Activated naive CD4-positive, alpha-beta T cell treated with anti-CD3 and anti-CD28 coated beads, Interleukin-2, amount 10 ng/mL, durations not matched to agents 7 days and 5 days (primary cell): ENCODE measurements at regions of chr12 and their contacts with region 1.

Region 1: DNA sequence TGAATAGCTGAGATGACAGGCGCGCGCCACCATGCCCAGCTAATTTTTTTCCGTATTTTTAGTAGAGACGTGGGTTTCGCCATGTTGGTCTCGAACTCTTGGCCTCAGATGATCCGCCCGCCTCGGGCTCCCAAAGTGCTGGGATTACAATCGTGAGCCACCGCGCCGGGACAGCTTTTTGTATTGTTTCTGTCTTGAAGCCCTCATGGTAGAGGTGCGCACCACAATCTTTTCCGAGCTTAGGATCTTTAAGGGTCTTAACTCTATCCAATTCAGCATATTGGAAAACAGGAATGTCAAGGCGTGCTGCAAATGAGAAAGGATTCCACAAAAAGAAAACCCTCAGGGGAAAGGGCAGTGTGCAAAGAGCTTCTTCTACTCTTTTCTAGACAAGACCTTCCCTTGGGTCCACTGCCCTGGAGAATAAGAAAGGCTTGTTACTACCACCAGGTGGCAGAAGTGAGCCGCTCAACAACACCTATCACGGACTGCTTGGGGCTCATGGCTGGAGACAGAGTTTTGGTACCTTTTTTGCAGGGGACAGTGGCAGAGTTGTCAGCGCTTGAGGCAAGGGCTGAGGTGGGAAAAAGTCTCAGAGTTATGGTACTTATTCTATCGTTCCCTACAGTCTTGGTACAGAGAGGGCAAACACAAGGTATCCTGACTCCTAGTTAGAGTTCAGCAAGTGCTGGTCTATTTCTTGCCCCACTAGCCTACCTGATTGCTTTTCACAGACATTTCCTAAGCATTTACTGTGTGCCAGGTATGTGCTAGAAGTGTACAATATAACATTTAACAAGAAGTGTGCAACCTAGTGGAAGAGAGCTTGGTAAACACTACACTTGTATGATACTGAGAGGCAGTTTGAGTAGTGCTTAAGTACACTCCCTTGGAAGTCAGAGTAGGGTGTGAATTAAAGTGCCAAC is 16.4 kb upstream of the SP7 start:
- DNase-seq: peak; percentile 90
- H3K4me3 Mint-ChIP-seq: no peak overlapping the region
- H3K27ac Mint-ChIP-seq: peak overlapping the region; percentile 2
- H3K4me1 Mint-ChIP-seq: peaks cover 9% of the 10 kb centered on the region
- H3K27me3 Mint-ChIP-seq: peaks cover 5% of the 10 kb centered on the region

Region 2: GRCh38 chr12:53255996-53256395 is 96.6 kb before region 1 on chr12:
- CTCF ChIA-PET with region 1: no interaction called
- DNase-seq: no peak
- H3K4me3 Mint-ChIP-seq: no peak overlapping the region
- H3K27ac Mint-ChIP-seq: peak overlapping the region; percentile 8
- H3K4me1 Mint-ChIP-seq: peaks cover 54% of the 10 kb centered on the region
- H3K27me3 Mint-ChIP-seq: no peaks in the 10 kb centered on the region

Region 3: DNA sequence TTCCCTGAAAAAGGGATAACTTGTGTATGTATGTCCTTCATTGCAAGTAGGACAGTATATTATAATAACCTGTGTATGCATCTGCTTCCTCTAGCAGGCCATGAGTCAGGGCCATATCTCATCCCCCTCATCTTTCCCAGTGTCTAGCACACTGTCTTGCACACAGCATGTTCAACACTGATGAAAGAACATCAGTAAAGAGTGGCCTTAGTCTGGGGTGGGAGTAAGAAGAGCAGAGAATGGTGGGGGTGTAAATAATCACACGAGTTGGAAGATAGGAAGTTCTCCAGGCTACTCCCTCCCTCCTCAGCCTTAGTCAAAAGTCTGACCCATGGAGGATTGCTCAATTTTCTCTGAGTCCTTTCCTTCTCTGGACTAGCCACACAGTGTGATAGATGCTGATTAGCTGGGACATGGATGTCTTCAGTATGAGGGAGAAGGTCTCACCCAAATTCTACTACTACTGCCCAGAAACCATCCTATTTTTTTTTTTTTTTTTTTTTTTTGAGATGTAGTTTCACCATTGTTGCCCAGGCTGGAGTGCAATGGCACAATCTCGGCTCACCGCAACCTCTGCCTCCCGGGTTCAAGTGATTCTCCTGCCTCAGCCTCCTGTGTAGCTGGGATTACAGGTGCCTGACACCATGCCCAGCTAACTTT is 12.8 kb after region 1 on chr12:
- CTCF ChIA-PET with region 1: interaction called, 11 read pairs
- DNase-seq: no peak
- H3K4me3 Mint-ChIP-seq: no peak overlapping the region
- H3K27ac Mint-ChIP-seq: no peak overlapping the region
- H3K4me1 Mint-ChIP-seq: peaks cover 18% of the 10 kb centered on the region
- H3K27me3 Mint-ChIP-seq: no peaks in the 10 kb centered on the region

Region 4: GRCh38 chr12:53388932-53389331 is 36.3 kb after region 1 on chr12:
- CTCF ChIA-PET with region 1: interaction called, 78 read pairs
- DNase-seq: no peak
- H3K4me3 Mint-ChIP-seq: no peak overlapping the region
- H3K27ac Mint-ChIP-seq: peak overlapping the region; percentile 62
- H3K4me1 Mint-ChIP-seq: peaks cover 56% of the 10 kb centered on the region
- H3K27me3 Mint-ChIP-seq: no peaks in the 10 kb centered on the region

Region 5: GRCh38 chr12:53427905-53428594 is 75.5 kb after region 1 on chr12:
- CTCF ChIA-PET with region 1: interaction called, 162 read pairs
- DNase-seq: no peak
- H3K4me3 Mint-ChIP-seq: no peak overlapping the region
- H3K27ac Mint-ChIP-seq: no peak overlapping the region
- H3K4me1 Mint-ChIP-seq: no peaks in the 10 kb centered on the region
- H3K27me3 Mint-ChIP-seq: peaks cover 23% of the 10 kb centered on the region

Region 6: DNA sequence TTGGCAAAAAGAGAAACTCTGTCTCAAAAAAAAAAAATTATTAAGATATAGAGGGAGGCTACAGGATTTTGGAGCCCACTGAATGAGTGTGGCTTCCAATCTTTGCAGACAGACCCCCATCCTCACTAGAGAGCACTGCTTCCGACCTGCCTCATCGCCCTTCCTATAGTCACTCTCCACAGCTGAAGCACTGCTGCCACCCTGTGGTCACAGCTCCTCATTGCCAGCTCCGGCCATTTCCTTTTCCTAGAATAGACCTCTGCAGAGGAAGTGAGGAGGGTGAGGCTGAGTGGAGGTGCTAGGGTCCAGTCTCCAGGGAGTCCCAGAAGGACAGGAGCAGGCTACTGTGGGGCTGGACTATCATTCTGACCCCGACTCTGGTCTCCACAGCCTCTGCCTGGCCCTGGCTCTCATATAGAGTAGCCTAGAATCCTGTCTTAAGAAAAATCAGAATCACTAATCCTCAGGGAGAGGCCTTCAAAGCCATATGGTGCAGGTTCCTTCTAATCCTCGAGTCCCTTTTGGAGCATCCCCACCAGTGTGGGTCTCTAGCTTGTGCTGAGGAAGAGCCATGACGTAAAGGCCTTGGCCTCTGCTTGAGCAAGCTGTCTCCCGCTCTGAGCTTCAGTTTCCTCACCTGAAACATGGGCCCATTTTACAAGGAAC is 156.1 kb after region 1 on chr12:
- CTCF ChIA-PET with region 1: interaction called, 38 read pairs
- DNase-seq: peak; percentile 90
- H3K4me3 Mint-ChIP-seq: no peak overlapping the region
- H3K27ac Mint-ChIP-seq: peak overlapping the region; percentile 34
- H3K4me1 Mint-ChIP-seq: peaks cover 12% of the 10 kb centered on the region
- H3K27me3 Mint-ChIP-seq: no peaks in the 10 kb centered on the region

Region 7: DNA sequence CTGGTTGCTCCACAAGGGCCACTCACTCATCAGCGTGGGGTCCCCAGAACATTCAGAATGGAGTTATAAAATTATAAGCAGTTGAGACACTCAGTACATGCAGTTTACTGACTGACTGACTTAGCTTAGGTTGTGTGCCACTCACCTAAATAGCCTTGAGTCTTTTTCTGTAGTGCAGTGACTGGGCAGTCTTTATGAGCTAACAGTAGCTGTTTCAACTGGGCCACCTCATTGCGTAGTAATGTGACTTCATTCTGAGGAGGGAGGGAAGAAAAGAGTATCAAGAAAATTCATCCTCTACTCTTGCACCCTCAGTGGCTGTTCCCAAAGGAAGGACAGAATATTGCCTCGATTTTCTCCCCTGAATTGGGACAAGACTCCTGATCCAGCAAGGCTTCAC is 170.5 kb after region 1 on chr12:
- CTCF ChIA-PET with region 1: no interaction called
- DNase-seq: no peak
- H3K4me3 Mint-ChIP-seq: no peak overlapping the region
- H3K27ac Mint-ChIP-seq: no peak overlapping the region
- H3K4me1 Mint-ChIP-seq: no peaks in the 10 kb centered on the region
- H3K27me3 Mint-ChIP-seq: no peaks in the 10 kb centered on the region